ENCODE measurements at regions of chr12 and their contacts with region 1.

Region 1: DNA sequence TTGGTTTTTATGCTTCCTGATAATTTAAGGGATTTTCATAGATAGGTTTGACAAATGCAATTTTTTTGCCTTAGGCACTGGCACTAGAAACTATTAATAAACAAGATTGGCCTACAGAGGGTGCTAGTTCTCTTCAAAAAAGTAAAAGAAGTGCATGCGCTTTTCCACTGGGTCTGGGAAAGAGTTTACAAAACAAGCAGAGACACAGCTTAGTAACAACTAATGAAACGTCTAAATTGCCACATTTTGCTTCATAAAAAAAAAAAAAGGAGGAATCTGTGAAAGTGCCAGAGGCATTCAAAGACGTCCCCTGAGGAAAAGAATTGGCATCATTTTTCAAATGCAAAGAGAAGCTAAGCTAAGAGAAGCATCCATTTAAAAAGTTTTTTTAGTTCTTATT is 58.3 kb upstream of the EEA1 start:
- DNase-seq: no peak
- ATAC-seq: peak; percentile 54
- H3K4me3 ChIP-seq: peak overlapping the region; percentile 32; the same call in 1 of the 2 replicates
- H3K27ac ChIP-seq: peak overlapping the region; percentile 94
- H3K4me1 ChIP-seq: peaks cover 27% of the 10 kb centered on the region
- H3K27me3 ChIP-seq: no peaks in the 10 kb centered on the region
- CTCF ChIP-seq: peak; percentile 39 to 64 (median 52); a peak in 5 of 6 replicates
- EP300 ChIP-seq: peak in 1 of 2 experiments; percentile 32; a peak in 1 of 4 replicates
- POLR2A ChIP-seq: no peak
- RAD21 ChIP-seq: peak; percentile 84

Region 2: GRCh38 chr12:92369643-92370042 is 617.7 kb before region 1 on chr12:
- CTCF ChIA-PET with region 1: no interaction called
- POLR2A ChIA-PET with region 1: no interaction called
- RAD21 ChIA-PET with region 1: no interaction called
- SMC1A ChIA-PET with region 1: no interaction called
- in situ Hi-C with region 1: no loop called
- intact Hi-C with region 1: no loop called
- DNase-seq: no peak
- ATAC-seq: no peak
- H3K4me3 ChIP-seq: no peak overlapping the region
- H3K27ac ChIP-seq: no peak overlapping the region
- H3K4me1 ChIP-seq: peaks cover 19% of the 10 kb centered on the region
- H3K27me3 ChIP-seq: no peaks in the 10 kb centered on the region
- CTCF ChIP-seq: no peak
- EP300 ChIP-seq: no peak
- POLR2A ChIP-seq: no peak
- RAD21 ChIP-seq: no peak

Region 3: GRCh38 chr12:92928962-92929915 is 58.1 kb before region 1 on chr12 and contains the start of gene EEA1:
- CTCF ChIA-PET with region 1: interaction called, 20 read pairs
- POLR2A ChIA-PET with region 1: interaction called, 7 read pairs
- RAD21 ChIA-PET with region 1: interaction called, 11 read pairs
- SMC1A ChIA-PET with region 1: interaction called, 76 read pairs
- in situ Hi-C with region 1: no loop called
- intact Hi-C with region 1: no loop called
- DNase-seq: peak; percentile 84
- ATAC-seq: peak; percentile 87
- H3K4me3 ChIP-seq: peak within 1 kb of the TSS; percentile 79
- H3K27ac ChIP-seq: peak within 1 kb of the TSS; percentile 98
- H3K4me1 ChIP-seq: peaks cover 4% of the 10 kb centered on the region
- H3K27me3 ChIP-seq: no peaks in the 10 kb centered on the region
- CTCF ChIP-seq: peak in 2 of 3 experiments; percentile 29 to 31; a peak in 3 of 6 replicates
- EP300 ChIP-seq: peak; percentile 30 to 35; a peak in 2 of 4 replicates
- POLR2A ChIP-seq: peak; percentile 96
- RAD21 ChIP-seq: peak; percentile 16; the same call in 1 of the 2 replicates
- polyA plus RNA-seq, gene EEA1: 5.5 to 9.5 TPM

Region 4: GRCh38 chr12:93025145-93025805 is 37.9 kb after region 1 on chr12:
- CTCF ChIA-PET with region 1: interaction called, 22 read pairs
- POLR2A ChIA-PET with region 1: interaction called, 6 read pairs
- RAD21 ChIA-PET with region 1: interaction called, 4 read pairs
- SMC1A ChIA-PET with region 1: interaction called, 420 read pairs
- in situ Hi-C with region 1: no loop called
- intact Hi-C with region 1: loop called (anchors 2 kb)
- DNase-seq: peak; percentile 63
- ATAC-seq: peak; percentile 99
- H3K4me3 ChIP-seq: no peak overlapping the region
- H3K27ac ChIP-seq: no peak overlapping the region
- H3K4me1 ChIP-seq: no peaks in the 10 kb centered on the region
- H3K27me3 ChIP-seq: no peaks in the 10 kb centered on the region
- CTCF ChIP-seq: peak; percentile 61 to 70 (median 69); a peak in 5 of 6 replicates
- EP300 ChIP-seq: no peak
- POLR2A ChIP-seq: no peak
- RAD21 ChIP-seq: peak; percentile 91

Region 5: GRCh38 chr12:93109551-93110203 is 122.3 kb after region 1 on chr12:
- CTCF ChIA-PET with region 1: interaction called, 13 read pairs
- POLR2A ChIA-PET with region 1: interaction called, 3 read pairs
- RAD21 ChIA-PET with region 1: interaction called, 10 read pairs
- SMC1A ChIA-PET with region 1: interaction called, 6 read pairs
- in situ Hi-C with region 1: no loop called
- intact Hi-C with region 1: no loop called
- DNase-seq: no peak
- ATAC-seq: peak; percentile 95
- H3K4me3 ChIP-seq: no peak overlapping the region
- H3K27ac ChIP-seq: no peak overlapping the region
- H3K4me1 ChIP-seq: peaks cover 14% of the 10 kb centered on the region
- H3K27me3 ChIP-seq: no peaks in the 10 kb centered on the region
- CTCF ChIP-seq: no peak
- EP300 ChIP-seq: peak; percentile 58 to 77
- POLR2A ChIP-seq: no peak
- RAD21 ChIP-seq: no peak; the same call in 1 of the 2 replicates

Region 6: DNA sequence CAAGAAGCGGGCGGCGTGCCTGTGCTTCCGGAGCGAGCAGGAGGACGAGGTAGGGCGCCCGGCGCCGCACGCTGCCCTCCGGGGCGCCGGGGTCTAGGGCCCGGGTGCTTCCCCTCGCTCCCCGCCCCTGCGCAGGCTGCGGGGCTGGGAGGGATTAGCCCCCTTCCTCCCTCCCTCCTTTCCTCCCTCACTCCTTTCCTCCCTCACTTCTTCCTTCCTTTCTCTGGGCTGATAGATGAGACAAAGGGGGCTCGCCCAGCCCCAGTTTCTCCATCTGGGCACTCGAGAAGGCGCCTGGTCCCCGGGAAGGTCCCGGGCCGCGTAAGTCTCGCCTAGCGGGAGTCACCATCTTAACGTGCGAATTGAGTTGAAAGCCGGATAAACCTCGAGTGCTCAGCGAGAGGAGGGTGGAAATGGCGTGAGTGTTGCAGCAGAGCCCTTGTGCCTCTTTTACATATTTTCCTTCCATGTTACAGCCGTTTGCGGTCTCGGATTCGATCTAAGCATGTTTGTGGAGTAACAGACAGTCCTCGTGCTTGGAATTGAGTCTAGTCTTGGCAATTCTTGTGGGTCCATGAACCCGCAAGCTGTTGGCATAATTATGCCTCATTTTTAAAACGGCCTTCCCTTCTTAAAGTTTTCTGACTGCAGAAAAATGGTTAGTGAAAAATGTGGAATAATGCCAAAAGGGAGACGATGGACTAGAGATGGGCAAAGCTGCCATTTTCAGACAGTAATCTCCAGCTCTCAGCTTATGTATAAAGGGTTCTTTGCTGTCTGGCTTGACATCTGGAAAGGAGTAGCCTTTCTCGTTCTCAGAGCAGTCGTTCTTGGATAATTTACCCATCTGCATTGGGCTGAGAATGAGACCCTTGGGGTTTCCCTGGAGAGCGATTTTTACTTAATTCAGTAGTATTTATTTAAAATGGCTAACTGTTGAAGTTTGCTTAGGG is 391.3 kb after region 1 on chr12:
- CTCF ChIA-PET with region 1: interaction called, 93 read pairs
- POLR2A ChIA-PET with region 1: interaction called, 6 read pairs
- RAD21 ChIA-PET with region 1: interaction called, 104 read pairs
- SMC1A ChIA-PET with region 1: interaction called, 124 read pairs
- in situ Hi-C with region 1: loop called (anchors 5 kb)
- intact Hi-C with region 1: loop called (anchors 1 kb)
- DNase-seq: no peak
- ATAC-seq: peak; percentile 51
- H3K4me3 ChIP-seq: peak overlapping the region; percentile 87
- H3K27ac ChIP-seq: peak overlapping the region; percentile 98
- H3K4me1 ChIP-seq: peaks cover 15% of the 10 kb centered on the region
- H3K27me3 ChIP-seq: no peaks in the 10 kb centered on the region
- CTCF ChIP-seq: no peak
- EP300 ChIP-seq: no peak
- POLR2A ChIP-seq: peak; percentile 56
- RAD21 ChIP-seq: no peak

Region 7: DNA sequence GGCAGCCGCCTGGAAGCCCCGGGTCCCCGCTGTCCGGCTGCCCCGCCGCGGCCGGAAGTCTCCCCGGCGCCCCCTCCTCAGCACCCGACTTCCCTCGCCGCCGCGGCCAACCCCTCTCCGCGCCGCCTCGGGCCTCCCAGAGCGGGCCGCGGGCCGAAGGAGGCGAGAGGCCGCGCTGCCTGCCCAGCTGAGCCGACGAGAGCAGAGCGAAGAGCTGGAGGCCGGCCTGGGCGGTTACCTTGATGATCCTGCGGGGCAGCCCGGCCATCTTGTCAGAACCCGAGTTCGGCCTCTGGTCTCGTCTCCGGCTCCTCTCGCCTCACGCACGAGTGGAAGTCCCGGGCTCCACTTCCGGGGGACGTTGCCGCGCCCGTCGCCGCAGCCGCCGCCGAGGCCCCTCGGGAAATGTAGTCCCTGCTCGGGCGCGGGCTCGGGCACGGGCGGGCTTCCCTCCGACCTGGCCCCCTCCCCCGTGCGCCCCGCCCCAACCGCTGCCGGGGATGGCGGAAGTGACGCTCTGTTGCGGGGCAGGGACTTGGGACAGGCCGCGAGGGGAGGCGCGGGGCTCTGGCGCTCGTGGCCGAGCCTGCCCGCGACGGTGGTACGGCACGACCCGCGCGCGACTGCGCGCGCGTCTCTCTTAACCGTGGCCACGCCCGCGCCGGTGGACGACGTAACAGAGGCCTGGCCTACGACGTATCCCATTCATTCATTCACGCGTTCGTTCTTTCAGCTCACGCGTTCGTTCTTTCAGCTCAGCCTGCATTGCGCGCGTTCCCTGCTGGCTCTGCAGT is 454.5 kb after region 1 on chr12 and contains the start of gene UBE2N:
- CTCF ChIA-PET with region 1: interaction called, 25 read pairs
- POLR2A ChIA-PET with region 1: no interaction called
- RAD21 ChIA-PET with region 1: interaction called, 13 read pairs
- SMC1A ChIA-PET with region 1: interaction called, 5 read pairs
- in situ Hi-C with region 1: no loop called
- intact Hi-C with region 1: no loop called
- DNase-seq: peak; percentile 70
- ATAC-seq: peak; percentile 87
- H3K4me3 ChIP-seq: peak within 1 kb of the TSS; percentile 83
- H3K27ac ChIP-seq: peak within 1 kb of the TSS; percentile 73
- H3K4me1 ChIP-seq: peaks cover 9% of the 10 kb centered on the region
- H3K27me3 ChIP-seq: no peaks in the 10 kb centered on the region
- CTCF ChIP-seq: no peak
- EP300 ChIP-seq: no peak
- POLR2A ChIP-seq: peak; percentile 96
- RAD21 ChIP-seq: no peak
- polyA plus RNA-seq, gene UBE2N: 699 to 945 TPM

Measured in GM12878 (cell line).